Heart left ventricle (tissue), 16 donors: ENCODE measurements at regions of chr19 and their contacts with region 1.

Region 1: DNA sequence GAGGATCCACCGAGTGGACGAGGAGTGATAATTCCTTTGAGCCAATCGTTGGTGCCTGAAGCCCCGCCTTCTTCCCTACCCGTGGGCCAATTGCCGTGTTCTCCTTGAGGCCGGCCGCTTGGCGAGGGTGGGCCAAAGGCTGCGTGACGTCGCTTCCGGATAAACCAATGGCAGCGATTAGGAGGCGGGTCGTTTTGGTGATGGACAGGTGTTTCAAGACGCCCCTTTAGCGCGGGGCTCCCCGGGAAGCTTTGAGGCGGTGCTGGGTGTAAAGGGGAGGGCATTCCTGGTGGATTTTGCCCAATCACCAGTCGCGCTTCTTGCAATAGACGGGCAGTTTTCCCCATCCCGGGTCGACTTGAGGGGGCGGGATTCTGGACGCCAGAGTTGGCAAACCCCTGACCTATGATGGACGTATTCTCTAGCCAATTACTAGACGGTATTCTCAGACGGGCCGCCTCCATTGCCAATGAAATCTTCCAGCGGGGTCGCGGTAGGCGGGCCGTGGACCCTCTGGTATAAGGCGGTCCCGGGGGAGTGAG is 310 bp upstream of the PRMT1 start:
- DNase-seq: peak; percentile 99 to 100 (median 100)
- ATAC-seq: peak; percentile 87 to 92 (median 91)
- H3K4me3 ChIP-seq: peak overlapping the region; percentile 71 to 100 (median 94)
- H3K27ac ChIP-seq: peak overlapping the region; percentile 80 to 100 (median 95)
- H3K4me1 ChIP-seq: peaks cover 0 to 56% (median 41%) of the 10 kb centered on the region in 12 donors
- H3K27me3 ChIP-seq: no peaks in the 10 kb centered on the region
- CTCF ChIP-seq: no peak
- POLR2A ChIP-seq: no peak

Region 2: DNA sequence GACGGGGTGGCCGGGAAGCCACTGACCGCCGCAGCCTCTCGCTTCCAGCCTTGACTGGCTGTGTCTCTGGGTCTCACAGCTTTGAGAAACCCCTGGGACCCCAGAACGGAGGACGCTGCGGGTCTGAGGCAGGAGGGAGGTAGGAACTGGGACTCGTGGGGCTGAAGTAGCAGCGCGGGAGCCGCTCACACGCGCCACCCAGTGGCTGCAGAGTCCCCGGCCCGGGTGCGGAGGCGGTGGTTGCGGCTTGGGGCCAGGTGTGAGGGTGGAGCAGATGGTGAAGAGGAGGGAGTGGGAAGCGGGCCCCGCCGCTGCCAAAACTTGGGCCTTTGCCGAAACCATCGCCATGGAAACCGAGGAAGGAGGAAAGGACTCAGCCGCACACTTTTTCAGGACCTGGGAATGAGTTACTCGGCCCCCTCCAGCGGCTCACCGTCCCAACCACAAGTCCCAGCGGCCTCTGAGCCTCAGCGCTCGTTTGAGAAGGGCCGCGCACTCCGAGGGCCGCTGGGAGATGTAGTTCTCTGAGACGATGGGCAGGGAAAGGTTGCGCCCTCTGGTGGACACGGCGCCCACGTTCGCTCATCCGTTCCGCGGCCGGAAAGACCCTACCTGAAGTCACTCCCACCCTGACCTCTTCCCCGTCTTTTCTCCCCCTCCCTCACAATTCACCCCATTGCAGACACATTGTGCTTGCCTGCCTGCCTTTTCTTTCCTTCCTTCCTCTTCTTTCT is 233.2 kb before region 1 on chr19:
- intact Hi-C with region 1: loop called in 1 of 10 experiments (anchors 1 kb)
- DNase-seq: peak; percentile 95 to 98 (median 95)
- ATAC-seq: peak; percentile 89 to 94 (median 90)
- H3K4me3 ChIP-seq: peak overlapping the region; percentile 55 to 79 (median 69)
- H3K27ac ChIP-seq: peak overlapping the region; percentile 54 to 95 (median 88)
- H3K4me1 ChIP-seq: peaks cover 0 to 20% (median 2%) of the 10 kb centered on the region in 12 donors
- H3K27me3 ChIP-seq: peaks cover 0 to 38% (median 26%) of the 10 kb centered on the region in 9 donors
- CTCF ChIP-seq: peak; percentile 72 to 93 (median 80)
- POLR2A ChIP-seq: no peak

Region 3: DNA sequence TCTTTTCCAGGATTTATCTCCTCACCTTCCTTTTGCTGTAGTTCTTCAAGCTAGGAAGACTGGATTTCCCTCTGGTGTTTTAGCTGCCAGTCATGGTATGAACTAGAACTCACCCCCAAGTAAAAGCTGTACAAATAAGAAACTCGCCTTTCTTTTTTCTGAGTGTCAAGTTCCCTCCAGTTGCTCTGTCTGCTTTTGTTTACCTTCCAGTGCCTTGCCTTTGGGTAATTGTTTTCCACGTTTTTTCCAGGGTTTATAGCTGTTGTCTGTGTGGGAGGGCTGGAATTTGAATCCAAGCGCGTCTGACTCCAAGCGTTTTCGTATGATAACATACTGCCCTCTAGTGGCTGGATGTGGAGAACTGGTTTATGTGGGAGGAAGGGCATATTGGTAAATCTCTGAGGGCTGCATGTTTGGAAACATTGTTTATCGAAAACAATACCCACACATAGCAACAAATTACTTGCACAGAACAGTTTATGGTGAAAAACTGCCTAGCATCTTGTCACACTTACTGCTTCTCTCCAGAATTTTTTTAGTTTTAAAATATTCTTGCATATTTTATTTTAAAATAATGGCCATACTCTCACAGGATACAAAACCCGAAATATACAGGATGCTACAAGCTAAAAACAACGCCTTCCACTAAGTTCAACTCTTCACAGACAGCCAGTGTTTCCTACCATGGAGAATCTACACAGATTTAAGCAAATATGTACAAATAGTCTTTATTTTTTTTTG is 129.8 kb before region 1 on chr19:
- intact Hi-C with region 1: no loop called
- DNase-seq: peak in 4 of 5 donors; percentile 59 to 79 (median 70)
- ATAC-seq: peak; percentile 74 to 89 (median 80)
- H3K4me3 ChIP-seq: no peak overlapping the region
- H3K27ac ChIP-seq: peak overlapping the region in 1 of 12 donors; percentile 37
- H3K4me1 ChIP-seq: peaks cover 0 to 19% (median 0%) of the 10 kb centered on the region in 12 donors
- H3K27me3 ChIP-seq: no peaks in the 10 kb centered on the region
- CTCF ChIP-seq: peak; percentile 72 to 89 (median 85)
- POLR2A ChIP-seq: no peak

Region 4: GRCh38 chr19:49570138-49570856 is 106.5 kb before region 1 on chr19:
- intact Hi-C with region 1: loop called in 5 of 10 experiments (anchors 5 to 10 kb)
- DNase-seq: peak in 3 of 5 donors; percentile 42 to 59 (median 51)
- ATAC-seq: peak; percentile 75 to 81 (median 76)
- H3K4me3 ChIP-seq: peak overlapping the region in 1 of 12 donors; percentile 9
- H3K27ac ChIP-seq: peak overlapping the region; percentile 36 to 84 (median 68)
- H3K4me1 ChIP-seq: peaks cover 4 to 52% (median 20%) of the 10 kb centered on the region in 12 donors
- H3K27me3 ChIP-seq: no peaks in the 10 kb centered on the region
- CTCF ChIP-seq: peak; percentile 97 to 100 (median 98)
- POLR2A ChIP-seq: no peak

Region 5: DNA sequence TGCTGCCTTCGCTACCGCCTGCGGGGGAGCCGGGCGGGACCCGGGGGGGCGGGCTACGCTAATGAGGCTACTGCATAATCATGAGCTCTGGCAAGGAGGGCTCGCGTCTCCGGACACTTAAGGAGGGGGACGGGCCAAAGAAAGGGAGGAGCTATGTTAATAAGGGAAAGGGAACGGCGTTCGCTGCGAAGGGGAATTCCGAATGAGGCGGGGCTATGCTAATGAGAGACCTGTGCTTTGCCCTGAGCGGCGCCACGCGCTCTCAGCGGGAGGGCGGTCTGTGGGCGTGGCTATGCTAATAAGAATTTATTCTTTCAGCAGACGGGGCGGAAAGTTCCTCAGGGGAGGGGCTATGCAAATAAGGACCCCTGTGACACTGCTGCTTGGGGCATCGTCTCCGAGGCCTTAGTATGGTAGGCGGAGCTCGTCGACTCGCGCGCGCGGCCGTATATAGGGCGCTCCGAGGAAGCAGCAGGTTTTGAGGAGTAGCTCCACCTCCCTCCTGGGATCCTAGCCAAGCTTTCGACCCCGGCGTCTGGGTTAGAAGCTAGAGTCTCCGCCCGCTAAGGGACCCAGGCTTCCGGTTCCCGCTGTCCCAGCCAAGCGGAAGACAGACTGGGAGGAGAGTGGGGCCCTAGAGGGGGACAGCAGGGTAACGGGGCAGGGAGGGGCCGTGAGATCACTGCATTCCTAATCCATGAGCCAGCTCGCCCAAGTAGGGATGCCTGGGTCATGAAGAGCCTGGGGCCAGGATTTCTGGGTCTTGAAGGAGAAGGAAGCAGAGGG is 36.5 kb before region 1 on chr19 and contains the start of gene RRAS:
- intact Hi-C with region 1: loop called in 2 of 10 experiments (anchors 1 to 2 kb)
- DNase-seq: peak; percentile 99 to 100 (median 100)
- ATAC-seq: peak; percentile 75 to 81 (median 78)
- H3K4me3 ChIP-seq: peak within 1 kb of the TSS; percentile 77 to 100 (median 92)
- H3K27ac ChIP-seq: peak within 1 kb of the TSS; percentile 98 to 100 (median 100)
- H3K4me1 ChIP-seq: peaks cover 3 to 77% (median 53%) of the 10 kb centered on the region in 12 donors
- H3K27me3 ChIP-seq: no peaks in the 10 kb centered on the region
- CTCF ChIP-seq: no peak
- POLR2A ChIP-seq: peak; percentile 43 to 83
- total RNA-seq, gene RRAS: 64.4 to 149 (median 110) TPM

Region 6: GRCh38 chr19:49817964-49818648 is 141.3 kb after region 1 on chr19 and contains the start of gene MED25:
- intact Hi-C with region 1: loop called in 1 of 10 experiments (anchors 5 kb)
- DNase-seq: peak; percentile 85 to 92 (median 89)
- ATAC-seq: peak; percentile 52 to 80 (median 75)
- H3K4me3 ChIP-seq: peak within 1 kb of the TSS; percentile 45 to 93 (median 80)
- H3K27ac ChIP-seq: peak within 1 kb of the TSS; percentile 87 to 100 (median 97)
- H3K4me1 ChIP-seq: peaks cover 0 to 40% (median 28%) of the 10 kb centered on the region in 12 donors
- H3K27me3 ChIP-seq: no peaks in the 10 kb centered on the region
- CTCF ChIP-seq: peak in 7 of 12 donors; percentile 10 to 49 (median 28)
- POLR2A ChIP-seq: peak; percentile 40 to 81
- total RNA-seq, gene MED25: 45.8 to 119 (median 54.7) TPM